Common myeloid progenitor, CD34-positive (primary cell): ENCODE measurements at regions of chr11 and their contacts with region 1.

Region 1: GRCh38 chr11:7571640-7572000 is 57.8 kb downstream of the PPFIBP2 start:
- DNase-seq: peak; percentile 17 to 35 (median 22)
- H3K4me3 ChIP-seq: no peak overlapping the region
- H3K27ac ChIP-seq: no peak overlapping the region
- H3K4me1 ChIP-seq: peaks cover 0 to 2% (median 0%) of the 10 kb centered on the region in 4 experiments
- H3K27me3 ChIP-seq: peaks cover 0 to 84% (median 52%) of the 10 kb centered on the region in 5 experiments

Region 2: DNA sequence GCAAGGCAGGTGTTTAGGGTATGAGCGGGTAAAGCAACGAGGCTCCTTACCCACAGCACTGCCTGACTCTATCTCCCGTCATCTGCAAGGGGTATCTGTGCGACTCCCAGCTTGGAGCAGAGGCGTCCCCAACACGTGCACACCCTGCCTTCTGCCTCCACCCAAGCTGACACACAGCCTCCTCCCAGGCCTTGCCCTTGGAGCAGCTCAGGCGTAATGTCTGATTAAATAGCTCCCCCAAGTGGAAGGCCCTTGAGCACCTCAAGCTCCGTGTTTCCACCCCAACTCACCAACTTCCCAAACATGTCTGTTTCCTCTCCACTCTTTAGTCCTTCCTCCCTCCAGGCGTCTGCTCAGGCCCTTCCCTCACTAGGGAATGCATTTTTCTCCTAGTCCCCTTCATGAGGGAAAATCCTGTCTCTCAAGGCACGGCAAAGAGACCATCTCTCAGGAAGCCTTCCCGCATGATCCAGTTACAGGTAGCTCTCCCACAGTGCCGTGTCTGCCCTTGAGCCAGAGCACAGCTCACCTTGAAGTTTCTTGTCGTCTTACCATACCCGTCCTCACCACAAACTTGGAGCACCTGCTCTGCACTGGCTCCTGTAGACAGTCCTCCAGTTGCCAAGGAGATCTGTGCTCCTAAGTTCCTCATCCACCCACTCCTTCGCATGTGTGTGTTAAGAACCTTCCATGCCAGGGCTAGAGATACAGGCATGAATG is 85.8 kb after region 1 on chr11:
- CTCF ChIA-PET with region 1: interaction called, 10 read pairs
- POLR2A ChIA-PET with region 1: no interaction called
- DNase-seq: peak; percentile 45 to 70 (median 65)
- H3K4me3 ChIP-seq: no peak overlapping the region
- H3K27ac ChIP-seq: no peak overlapping the region
- H3K4me1 ChIP-seq: no peaks in the 10 kb centered on the region
- H3K27me3 ChIP-seq: peaks cover 0 to 37% (median 10%) of the 10 kb centered on the region in 5 experiments

Region 3: GRCh38 chr11:7665473-7666291 is 94.1 kb after region 1 on chr11:
- CTCF ChIA-PET with region 1: interaction called, 10 read pairs
- POLR2A ChIA-PET with region 1: no interaction called
- DNase-seq: peak; percentile 62 to 67 (median 65)
- H3K4me3 ChIP-seq: no peak overlapping the region
- H3K27ac ChIP-seq: no peak overlapping the region
- H3K4me1 ChIP-seq: no peaks in the 10 kb centered on the region
- H3K27me3 ChIP-seq: peaks cover 0 to 32% (median 7%) of the 10 kb centered on the region in 5 experiments

Region 4: DNA sequence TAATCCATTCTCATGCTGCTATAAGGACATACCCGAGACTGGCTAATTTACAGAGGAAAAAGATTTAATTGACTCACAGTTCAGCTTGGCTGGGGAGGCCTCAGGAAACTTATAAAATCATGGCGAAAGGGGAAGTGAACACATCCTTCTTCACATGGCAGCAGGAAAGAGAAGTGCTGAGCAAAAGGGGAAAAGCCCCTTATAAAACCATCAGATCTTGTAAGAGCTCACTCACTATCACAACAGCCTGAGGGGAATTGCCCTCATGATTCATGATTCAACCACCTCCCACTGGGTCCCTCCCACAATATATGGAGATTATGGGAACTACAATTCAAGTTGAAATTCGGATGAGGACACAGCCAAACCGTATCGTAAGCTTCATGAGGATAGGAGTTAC is 105.5 kb after region 1 on chr11:
- CTCF ChIA-PET with region 1: no interaction called
- POLR2A ChIA-PET with region 1: no interaction called
- DNase-seq: peak in 2 of 3 donors; percentile 34
- H3K4me3 ChIP-seq: no peak overlapping the region
- H3K27ac ChIP-seq: no peak overlapping the region
- H3K4me1 ChIP-seq: peaks cover 0 to 10% (median 3%) of the 10 kb centered on the region in 4 experiments
- H3K27me3 ChIP-seq: peaks cover 7 to 79% (median 32%) of the 10 kb centered on the region in 5 experiments

Region 5: GRCh38 chr11:7688238-7688826 is 116.7 kb after region 1 on chr11:
- CTCF ChIA-PET with region 1: interaction called, 10 read pairs
- POLR2A ChIA-PET with region 1: no interaction called
- DNase-seq: peak; percentile 29 to 62 (median 61)
- H3K4me3 ChIP-seq: no peak overlapping the region
- H3K27ac ChIP-seq: no peak overlapping the region
- H3K4me1 ChIP-seq: no peaks in the 10 kb centered on the region
- H3K27me3 ChIP-seq: peaks cover 5 to 48% (median 10%) of the 10 kb centered on the region in 5 experiments